ENCODE measurements at regions of chr10 and their contacts with region 1.

Region 1: DNA sequence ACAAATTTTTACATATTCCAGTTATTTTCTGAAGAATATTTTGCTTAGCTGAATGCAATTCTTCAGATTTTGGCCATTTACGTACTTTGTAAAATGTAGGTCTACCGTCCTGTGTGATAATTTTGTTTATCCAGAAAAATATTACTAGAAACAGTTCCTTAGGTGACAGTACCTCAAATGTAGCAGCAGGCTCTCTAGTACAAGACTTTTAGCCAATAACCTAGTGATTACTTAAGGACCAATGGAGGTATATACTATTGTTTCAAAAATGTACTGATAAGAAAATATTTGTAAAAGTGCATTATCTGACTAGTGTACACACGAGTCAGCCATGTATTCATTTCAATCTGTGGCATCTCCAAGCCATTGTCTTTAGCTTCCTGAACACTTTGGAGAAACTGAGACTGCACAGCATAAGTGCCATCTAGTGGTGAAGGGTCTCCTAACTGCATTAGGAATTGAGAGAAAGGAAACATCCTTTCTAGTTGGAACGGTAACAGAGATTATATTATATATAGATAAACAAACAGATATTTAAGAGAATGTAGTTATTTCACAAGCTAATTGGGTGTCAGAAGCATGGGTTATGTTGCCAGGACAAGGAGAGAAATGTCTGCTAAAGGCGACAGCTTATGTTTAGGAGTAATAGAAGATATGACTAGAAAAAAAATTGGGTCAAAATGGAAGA is 23.7 kb downstream of the RTKN2 start:
- DNase-seq: peak; percentile 11 to 34
- ATAC-seq: peak; percentile 90

Region 2: DNA sequence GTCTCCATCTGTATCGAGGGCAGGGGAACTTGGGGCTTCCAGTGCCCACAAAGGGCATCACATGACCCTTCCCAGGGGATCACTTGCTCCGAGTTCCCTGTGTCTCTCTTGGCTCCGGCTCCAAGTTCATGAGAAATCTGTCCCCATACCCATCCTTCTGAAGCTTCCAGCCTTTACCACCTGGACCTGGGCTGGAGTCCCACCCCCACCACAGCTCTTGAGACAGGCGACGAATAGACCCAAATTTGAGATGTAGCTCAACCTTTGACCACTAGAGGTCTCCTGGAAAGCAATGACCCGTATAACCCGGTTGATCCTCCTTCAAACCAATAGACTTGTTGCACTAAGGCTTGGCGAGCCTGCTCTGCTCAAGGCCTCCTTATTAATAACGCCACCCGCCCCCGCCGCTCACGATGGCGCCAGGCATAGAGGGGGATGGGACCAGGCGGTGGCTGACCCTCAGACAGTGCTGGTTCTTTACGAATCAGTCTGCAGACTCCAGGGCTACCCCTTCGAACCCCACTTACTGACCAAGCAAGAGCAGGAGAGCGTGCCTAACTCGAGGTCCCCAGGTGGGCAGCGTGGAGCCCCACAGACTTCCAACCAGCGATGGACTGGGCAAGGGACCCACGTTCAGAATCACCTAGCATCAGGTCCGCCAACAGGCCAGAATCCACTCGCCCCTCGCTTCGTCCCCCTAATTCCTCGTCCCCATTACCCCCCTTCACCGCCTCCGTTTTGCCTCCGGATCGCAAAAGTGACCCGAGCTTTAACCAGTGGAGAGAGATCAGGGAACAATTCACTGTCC is 347.9 kb before region 1 on chr10:
- intact Hi-C with region 1: loop called in 1 of 2 experiments (anchors 10 kb)
- DNase-seq: peak; percentile 47 to 64
- ATAC-seq: peak; percentile 48

Region 3: DNA sequence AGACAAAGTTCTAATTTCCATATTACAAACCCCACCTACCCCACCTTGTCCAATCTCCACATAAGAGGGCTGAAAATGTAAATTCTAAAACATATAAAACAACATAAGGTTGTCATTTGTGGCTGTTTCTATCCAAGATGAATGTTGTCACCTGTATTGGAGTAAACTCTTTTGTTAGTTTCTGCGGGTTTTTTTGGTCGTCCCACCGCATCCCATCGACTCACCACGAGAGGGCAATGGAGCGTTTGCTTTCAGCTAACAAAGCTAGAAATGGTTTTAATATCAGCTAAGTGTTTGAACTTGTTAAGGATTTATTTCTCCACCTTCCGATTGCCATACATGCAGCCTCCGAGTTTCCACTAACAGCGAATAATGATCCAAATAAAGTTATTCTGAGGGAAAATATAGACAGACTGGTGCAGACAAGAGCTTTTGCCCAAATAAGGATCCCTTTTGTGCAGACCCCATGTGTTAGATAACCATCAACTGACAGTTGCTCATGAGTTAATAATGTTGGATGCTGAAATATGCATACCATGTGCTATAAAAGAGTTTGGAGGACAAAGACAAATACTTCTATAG is 206.2 kb before region 1 on chr10:
- intact Hi-C with region 1: loop called in 1 of 2 experiments (anchors 2 kb)
- DNase-seq: peak; percentile 77 to 81
- ATAC-seq: peak; percentile 73

Region 4: DNA sequence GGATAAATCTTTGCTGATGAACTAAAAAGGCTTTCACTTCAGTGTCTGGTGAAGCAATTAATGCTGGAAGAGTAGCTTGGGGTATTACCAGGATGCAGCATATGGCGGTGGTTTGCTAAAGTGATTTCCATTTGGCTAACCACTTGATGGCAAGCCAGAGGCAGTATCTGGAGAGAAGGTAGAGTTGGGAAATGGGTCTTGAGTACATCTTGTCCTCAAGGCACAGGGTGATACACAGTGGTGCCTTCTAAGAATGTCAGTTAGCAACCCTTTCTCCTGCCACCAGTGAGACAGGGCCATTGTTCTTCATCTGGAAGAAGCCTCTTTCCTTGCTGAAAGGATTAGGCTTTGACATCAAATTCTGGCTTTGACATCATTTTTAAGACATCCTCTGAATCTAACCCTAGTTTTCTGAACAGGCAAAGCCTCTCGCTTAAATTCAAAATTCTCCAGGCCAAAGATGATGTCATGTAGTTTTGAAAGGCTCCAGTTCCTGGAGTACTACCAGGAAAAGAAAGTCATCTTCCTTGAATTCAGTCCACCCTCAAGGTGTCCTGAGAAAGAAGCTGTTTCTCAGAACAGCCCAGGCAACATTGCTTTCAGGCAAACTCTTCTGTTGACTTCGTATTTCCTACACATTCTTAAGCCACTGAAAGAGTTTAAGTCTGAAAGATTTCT is 181.0 kb before region 1 on chr10:
- intact Hi-C with region 1: no loop called
- DNase-seq: no peak
- ATAC-seq: no peak